ENCODE measurements at regions of chr12 and their contacts with region 1.

Region 1: DNA sequence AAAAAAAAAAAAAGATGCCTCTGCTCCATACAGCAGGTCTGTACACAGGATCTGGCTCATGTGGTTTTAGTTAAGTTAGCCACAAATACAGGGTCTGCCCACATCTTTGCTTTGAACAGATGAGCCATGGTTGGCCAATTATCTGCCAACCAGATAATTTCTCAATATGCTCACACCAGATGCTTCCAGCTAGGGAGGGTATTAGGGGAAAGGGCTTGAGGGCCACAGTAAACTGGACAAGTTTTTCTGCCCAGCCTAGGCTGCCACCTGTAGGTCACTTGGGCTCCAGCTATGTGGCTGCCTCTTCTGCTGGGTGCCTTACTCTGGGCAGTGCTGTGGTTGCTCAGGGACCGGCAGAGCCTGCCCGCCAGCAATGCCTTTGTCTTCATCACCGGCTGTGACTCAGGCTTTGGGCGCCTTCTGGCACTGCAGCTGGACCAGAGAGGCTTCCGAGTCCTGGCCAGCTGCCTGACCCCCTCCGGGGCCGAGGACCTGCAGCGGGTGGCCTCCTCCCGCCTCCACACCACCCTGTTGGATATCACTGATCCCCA is 776 bp downstream of the RDH5 start:
- DNase-seq: peak; percentile 91
- ATAC-seq: peak; percentile 57
- H3K4me3 ChIP-seq: no peak overlapping the region
- H3K27ac ChIP-seq: peak overlapping the region; percentile 24
- H3K4me1 ChIP-seq: peaks cover 32% of the 10 kb centered on the region
- H3K27me3 ChIP-seq: no peaks in the 10 kb centered on the region
- CTCF ChIP-seq: peak; percentile 69
- POLR2A ChIP-seq: no peak
- RAD21 ChIP-seq: peak; percentile 76

Region 2: DNA sequence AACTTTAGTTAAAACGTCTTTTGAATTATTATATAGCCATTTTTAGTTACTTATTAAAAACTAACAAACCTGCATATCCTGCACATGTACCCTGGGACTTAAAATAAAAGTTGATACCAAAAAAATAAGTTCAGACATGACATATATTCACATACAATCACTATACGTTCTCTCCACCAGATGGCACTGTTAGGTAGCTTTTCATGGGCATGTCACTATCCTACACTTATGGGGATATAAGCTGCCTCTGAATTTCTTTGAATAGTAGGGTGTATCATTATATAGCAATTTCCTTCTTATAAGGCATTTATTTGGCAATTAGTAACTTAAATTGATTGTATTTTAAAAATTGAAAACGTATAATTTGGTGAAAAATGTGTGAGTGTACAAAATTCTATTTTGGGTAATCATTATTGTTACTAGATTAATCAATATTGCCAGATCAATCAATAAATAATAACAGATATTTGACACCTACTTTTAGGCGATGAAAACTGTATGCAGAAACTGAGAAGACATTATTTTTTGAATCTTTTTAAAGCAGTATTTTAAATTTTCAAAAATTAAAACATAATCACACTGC is 531.9 kb before region 1 on chr12:
- CTCF ChIA-PET with region 1: no interaction called
- POLR2A ChIA-PET with region 1: no interaction called
- dilution Hi-C with region 1: no loop called
- in situ Hi-C with region 1: no loop called
- intact Hi-C with region 1: loop called (anchors 2 kb)
- DNase-seq: peak; percentile 76
- ATAC-seq: peak; percentile 91
- H3K4me3 ChIP-seq: no peak overlapping the region
- H3K27ac ChIP-seq: no peak overlapping the region
- H3K4me1 ChIP-seq: no peaks in the 10 kb centered on the region
- H3K27me3 ChIP-seq: no peaks in the 10 kb centered on the region
- CTCF ChIP-seq: peak; percentile 69
- POLR2A ChIP-seq: no peak
- RAD21 ChIP-seq: peak; percentile 73

Region 3: DNA sequence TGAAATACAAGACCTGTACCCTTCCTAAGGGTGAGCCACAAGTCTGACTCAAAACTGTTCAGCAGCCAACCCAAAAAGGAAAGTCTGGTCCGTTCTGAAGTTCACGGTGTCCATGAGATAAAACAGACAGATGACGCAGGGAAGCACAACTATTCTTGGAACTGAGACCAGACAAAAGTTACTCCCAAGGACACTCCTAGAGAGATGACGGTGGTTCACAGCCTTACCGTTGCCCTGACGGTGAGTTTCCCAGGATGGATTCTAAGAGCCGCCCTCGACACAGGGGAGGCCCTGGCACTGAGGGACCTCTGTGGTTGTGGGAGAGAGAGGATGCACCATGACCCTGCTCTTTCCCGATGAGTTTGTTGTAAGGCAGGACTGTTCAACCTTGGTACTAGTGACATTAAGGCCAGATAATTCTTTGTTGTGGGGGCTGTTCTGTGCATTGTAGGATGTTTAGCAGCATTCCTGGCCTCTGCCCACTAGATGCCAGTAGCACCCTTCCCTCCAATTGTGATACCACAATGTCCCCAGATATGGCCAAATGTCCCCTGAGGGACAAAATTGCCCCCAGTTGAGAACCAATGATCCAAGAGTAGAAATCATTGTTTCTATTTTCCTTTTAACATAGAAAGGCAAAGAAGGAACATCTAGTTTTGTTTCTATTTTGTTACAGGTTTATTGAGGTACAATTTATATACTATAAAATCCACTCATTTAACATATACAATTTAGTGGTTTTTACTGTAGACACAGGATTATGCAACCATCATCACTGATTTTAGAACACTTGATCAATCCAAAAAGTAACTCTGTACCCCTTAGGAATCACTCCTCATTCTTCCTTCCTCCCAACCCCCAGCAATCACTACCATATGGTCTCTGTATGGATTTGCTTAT is 61.2 kb before region 1 on chr12:
- CTCF ChIA-PET with region 1: interaction called, 4 read pairs
- POLR2A ChIA-PET with region 1: no interaction called
- dilution Hi-C with region 1: no loop called
- in situ Hi-C with region 1: no loop called
- intact Hi-C with region 1: loop called (anchors 2 kb)
- DNase-seq: peak; percentile 9
- ATAC-seq: peak; percentile 73
- H3K4me3 ChIP-seq: no peak overlapping the region
- H3K27ac ChIP-seq: no peak overlapping the region
- H3K4me1 ChIP-seq: no peaks in the 10 kb centered on the region
- H3K27me3 ChIP-seq: peaks cover 26% of the 10 kb centered on the region
- CTCF ChIP-seq: peak; percentile 53
- POLR2A ChIP-seq: no peak
- RAD21 ChIP-seq: peak; percentile 68

Region 4: GRCh38 chr12:55789171-55789570 is 68.2 kb after region 1 on chr12:
- CTCF ChIA-PET with region 1: no interaction called
- POLR2A ChIA-PET with region 1: no interaction called
- dilution Hi-C with region 1: no loop called
- in situ Hi-C with region 1: no loop called
- intact Hi-C with region 1: no loop called
- DNase-seq: no peak
- ATAC-seq: no peak
- H3K4me3 ChIP-seq: no peak overlapping the region
- H3K27ac ChIP-seq: no peak overlapping the region
- H3K4me1 ChIP-seq: no peaks in the 10 kb centered on the region
- H3K27me3 ChIP-seq: no peaks in the 10 kb centered on the region
- CTCF ChIP-seq: no peak
- POLR2A ChIP-seq: no peak
- RAD21 ChIP-seq: no peak